Activated naive CD8-positive, alpha-beta T cell treated with anti-CD3 and anti-CD28 coated beads, Interleukin-2, amount 10 ng/mL, durations not matched to agents 7 days and 5 days (primary cell): ENCODE measurements at regions of chr18 and their contacts with region 1.

Region 1: GRCh38 chr18:32092422-32093101 is 888 bp downstream of the RNF138 start:
- DNase-seq: peak; percentile 99
- ATAC-seq: peak; percentile 84
- H3K4me3 Mint-ChIP-seq: peak overlapping the region; percentile 100
- H3K27ac Mint-ChIP-seq: peak overlapping the region; percentile 96
- H3K4me1 Mint-ChIP-seq: peaks cover 41% of the 10 kb centered on the region
- H3K27me3 Mint-ChIP-seq: no peaks in the 10 kb centered on the region

Region 2: DNA sequence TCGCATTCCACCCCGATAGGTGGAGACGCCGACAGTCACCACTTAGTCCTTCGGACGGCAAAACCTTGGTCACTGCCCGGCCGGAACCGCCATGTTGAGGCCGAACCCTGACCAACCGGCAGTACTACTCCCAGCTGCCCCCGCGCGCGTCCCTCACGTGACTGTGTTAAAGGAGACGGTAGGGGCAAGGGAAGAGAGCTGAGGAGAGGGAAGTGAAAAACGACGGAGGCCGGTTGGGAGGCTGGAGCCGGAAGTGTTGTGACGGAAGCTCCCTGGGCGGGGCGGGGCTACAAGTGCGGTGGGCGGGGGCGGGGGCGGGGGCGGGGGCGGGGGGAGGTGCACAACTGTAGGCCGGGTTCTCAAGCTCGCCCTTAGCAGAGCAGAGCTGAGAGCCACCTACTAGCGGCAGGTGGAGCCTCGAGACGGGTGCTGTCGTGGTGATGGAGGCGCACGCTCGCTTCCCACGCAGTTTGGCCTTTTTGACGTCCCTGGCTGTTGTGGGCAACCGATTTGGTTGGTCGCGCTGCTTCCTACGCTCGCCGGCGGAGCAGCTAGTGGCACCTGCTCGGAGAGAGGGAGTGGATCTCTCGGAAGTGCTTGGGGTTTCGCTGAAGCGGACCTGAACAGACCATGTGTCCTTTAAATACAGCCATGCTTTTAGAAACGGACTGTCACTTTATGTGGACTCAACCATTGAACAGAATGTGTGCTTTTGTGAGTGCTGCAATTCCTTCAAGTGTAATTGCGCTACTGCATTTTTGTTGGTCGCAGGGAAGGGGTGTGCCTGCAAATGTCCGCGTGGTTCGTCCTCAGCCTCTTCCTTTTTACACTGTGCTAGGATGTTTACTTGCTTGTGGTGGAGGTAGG is 149.3 kb before region 1 on chr18 and contains the start of gene TRAPPC8:
- POLR2A ChIA-PET with region 1: interaction called, 26 read pairs
- DNase-seq: peak; percentile 88
- ATAC-seq: peak; percentile 93
- H3K4me3 Mint-ChIP-seq: peak within 1 kb of the TSS; percentile 99
- H3K27ac Mint-ChIP-seq: peak within 1 kb of the TSS; percentile 99
- H3K4me1 Mint-ChIP-seq: peaks cover 33% of the 10 kb centered on the region
- H3K27me3 Mint-ChIP-seq: no peaks in the 10 kb centered on the region
- total RNA-seq, gene TRAPPC8: 39.6 to 46.1 TPM

Region 3: GRCh38 chr18:32060026-32060425 is 32.5 kb before region 1 on chr18:
- POLR2A ChIA-PET with region 1: interaction called, 11 read pairs
- DNase-seq: no peak
- ATAC-seq: peak; percentile 78
- H3K4me3 Mint-ChIP-seq: no peak overlapping the region
- H3K27ac Mint-ChIP-seq: peak overlapping the region; percentile 44
- H3K4me1 Mint-ChIP-seq: peaks cover 33% of the 10 kb centered on the region
- H3K27me3 Mint-ChIP-seq: no peaks in the 10 kb centered on the region